Breast epithelium (tissue), 4 donors: ENCODE measurements at regions of chr2 and their contacts with region 1.

Region 1: DNA sequence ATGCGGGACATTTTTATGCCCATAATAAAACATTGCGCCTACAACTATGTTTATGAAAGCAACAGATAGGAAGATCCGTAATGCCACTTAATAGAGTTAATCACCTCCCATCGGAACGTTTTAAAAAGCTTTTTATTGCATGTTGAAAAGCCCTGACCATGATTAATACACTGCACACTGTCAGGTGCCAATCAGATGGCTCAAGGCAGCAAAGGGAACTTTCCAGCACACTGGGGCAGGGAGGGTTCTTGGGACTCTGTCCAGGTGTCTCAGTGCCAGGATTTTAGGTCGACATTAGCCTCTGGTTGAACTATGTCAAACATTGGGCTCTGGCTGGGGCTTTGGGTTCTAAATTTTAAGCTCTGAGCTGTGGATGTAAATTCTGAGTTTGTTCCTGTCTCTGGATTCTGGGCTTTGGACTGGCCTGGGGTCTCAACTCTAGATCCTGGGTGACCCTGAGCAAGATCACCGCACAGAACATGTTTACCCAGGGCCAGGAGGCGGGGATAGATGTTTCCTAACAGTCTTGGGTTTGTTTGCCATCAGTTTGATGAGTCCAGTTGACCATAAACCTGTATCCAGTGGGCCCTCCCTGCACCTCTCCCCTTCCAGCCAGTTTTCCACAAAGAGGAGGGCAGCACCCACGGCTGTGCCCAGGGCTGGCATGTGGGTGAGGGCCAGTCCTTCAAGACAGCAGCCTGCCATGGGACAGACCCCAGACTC is 262.7 kb downstream of the ATAD2B start:
- DNase-seq: no peak
- H3K4me3 ChIP-seq: no peak overlapping the region
- H3K27ac ChIP-seq: no peak overlapping the region
- H3K4me1 ChIP-seq: peaks cover 0 to 5% of the 10 kb centered on the region in 2 donors
- H3K27me3 ChIP-seq: no peaks in the 10 kb centered on the region
- CTCF ChIP-seq: no peak
- POLR2A ChIP-seq: no peak

Region 2: GRCh38 chr2:23651191-23652080 is 12.8 kb before region 1 on chr2:
- intact Hi-C with region 1: loop called (anchors 1 kb)
- DNase-seq: no peak
- H3K4me3 ChIP-seq: no peak overlapping the region
- H3K27ac ChIP-seq: no peak overlapping the region
- H3K4me1 ChIP-seq: no peaks in the 10 kb centered on the region
- H3K27me3 ChIP-seq: no peaks in the 10 kb centered on the region
- CTCF ChIP-seq: no peak
- POLR2A ChIP-seq: no peak